Activated naive CD4-positive, alpha-beta T cell treated with anti-CD3 and anti-CD28 coated beads for 36 hours (primary cell): ENCODE measurements at regions of chr2 and their contacts with region 1.

Region 1: DNA sequence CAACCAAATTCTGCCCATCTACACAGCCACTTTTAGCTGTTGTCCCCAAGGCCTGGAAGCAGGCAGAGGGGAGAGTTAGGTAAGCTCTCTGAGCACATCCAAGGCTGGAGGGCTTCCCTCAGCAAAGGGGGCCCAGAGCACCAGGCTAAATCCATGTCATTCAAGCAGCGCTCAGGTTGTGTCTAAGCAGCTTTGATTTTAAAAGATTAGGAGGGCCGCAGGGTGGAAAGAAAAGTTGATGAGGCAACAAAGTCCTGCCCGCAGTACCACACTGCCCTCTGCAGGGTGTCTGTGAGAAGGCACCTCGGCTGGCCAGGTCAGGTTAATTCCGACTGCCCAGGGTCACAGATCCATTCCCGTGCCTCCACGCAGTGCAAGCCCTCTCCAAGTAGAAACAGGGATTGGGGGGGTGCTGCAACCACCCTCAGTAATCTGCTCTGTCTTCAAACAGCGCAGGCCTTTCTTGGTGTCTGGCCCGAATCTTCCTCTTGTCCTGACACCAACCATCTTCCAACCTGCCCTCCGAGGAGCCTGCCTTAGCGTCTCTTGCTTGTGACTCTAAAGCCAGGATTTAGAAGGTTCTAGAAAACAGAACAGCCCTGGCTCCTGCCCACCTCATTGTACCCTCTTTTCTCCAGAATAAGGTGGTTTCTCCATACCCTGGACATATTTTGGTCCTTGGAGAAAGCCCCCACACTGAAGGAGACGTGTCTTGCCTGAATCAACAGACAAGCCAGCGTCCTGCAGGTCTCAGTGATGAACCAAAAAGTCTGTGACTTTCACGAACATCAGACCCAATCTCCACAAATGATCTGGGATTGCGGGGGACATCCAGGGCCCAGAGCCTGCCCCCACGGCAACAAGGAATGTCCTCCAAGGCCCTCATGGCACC is 289.2 kb downstream of the TNS1 start:
- DNase-seq: peak; percentile 85
- H3K4me3 Mint-ChIP-seq: no peak overlapping the region
- H3K27ac Mint-ChIP-seq: no peak overlapping the region
- H3K4me1 Mint-ChIP-seq: peaks cover 3% of the 10 kb centered on the region
- H3K27me3 Mint-ChIP-seq: no peaks in the 10 kb centered on the region

Region 2: GRCh38 chr2:216683846-216684507 is 1029.7 kb before region 1 on chr2:
- CTCF ChIA-PET with region 1: interaction called, 7 read pairs
- intact Hi-C with region 1: loop called (anchors 1 kb)
- DNase-seq: no peak
- H3K4me3 Mint-ChIP-seq: no peak overlapping the region
- H3K27ac Mint-ChIP-seq: no peak overlapping the region
- H3K4me1 Mint-ChIP-seq: peaks cover 2% of the 10 kb centered on the region
- H3K27me3 Mint-ChIP-seq: peaks cover 27% of the 10 kb centered on the region

Region 3: DNA sequence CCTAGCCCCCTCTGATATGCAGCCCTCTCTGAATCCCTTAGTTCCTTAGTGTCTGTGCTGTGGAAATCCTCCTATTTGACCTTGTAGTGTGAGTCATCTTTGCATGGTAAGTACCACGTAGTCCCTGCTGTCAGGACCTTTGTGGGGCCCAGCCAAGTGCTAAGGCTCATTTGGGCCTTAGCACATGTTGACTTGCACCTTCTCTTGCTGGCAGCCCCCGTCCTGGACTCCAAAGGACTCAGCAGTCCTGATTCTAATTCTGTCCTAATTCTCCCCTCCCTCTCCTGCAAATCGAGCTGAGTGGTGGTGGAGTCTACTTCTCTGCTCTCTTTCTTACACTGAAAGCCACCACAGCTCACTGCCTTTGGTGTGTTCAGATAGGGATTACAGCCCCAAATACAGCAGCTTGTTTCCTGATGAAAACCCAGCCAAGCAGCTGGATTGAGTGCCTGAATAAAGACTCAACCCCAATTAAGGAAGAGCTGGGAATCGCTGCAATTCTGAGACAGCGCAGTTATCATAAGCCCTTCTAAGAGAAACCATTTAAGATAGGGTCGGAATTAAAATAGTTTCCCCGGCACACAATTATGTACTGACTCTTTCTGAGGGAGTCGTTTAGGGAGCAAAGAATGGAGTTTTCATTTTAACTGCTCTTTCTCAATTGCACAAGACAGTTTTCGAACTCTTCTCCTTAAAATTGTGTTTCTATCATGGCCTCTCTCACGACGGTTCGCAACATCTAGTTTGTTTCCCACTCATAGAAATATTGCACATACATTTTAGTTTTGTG is 638.2 kb before region 1 on chr2:
- CTCF ChIA-PET with region 1: interaction called, 3 read pairs
- intact Hi-C with region 1: loop called (anchors 10 kb)
- DNase-seq: no peak
- H3K4me3 Mint-ChIP-seq: no peak overlapping the region
- H3K27ac Mint-ChIP-seq: no peak overlapping the region
- H3K4me1 Mint-ChIP-seq: peaks cover 4% of the 10 kb centered on the region
- H3K27me3 Mint-ChIP-seq: no peaks in the 10 kb centered on the region

Region 4: DNA sequence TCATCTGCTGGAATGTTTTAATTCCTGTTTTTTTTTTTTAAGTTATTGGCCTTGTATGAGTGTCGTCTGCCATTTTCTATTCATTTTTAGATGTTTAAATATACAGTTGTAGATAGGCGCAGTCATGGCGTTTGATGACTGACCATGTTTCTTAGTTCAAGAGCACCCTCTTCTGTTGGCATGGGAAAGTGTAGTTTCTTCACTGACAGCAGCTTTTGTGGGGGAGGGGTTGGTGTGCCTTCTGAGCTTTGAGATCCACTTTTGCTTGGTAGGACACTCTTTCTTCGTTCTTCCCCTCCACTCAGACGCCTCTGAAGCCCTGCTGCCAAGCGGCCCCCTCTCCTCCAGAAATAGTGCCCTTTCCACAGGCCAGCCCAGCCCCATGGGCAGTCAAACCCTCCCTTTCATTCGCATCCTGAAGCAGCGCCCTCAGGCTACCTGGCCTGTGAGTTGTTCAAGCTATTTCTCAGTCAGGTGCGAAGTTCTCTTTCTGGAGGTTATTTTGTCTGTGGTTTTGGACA is 202.8 kb before region 1 on chr2:
- CTCF ChIA-PET with region 1: interaction called, 6 read pairs
- intact Hi-C with region 1: loop called (anchors 1 kb)
- DNase-seq: peak; percentile 70
- H3K4me3 Mint-ChIP-seq: no peak overlapping the region
- H3K27ac Mint-ChIP-seq: no peak overlapping the region
- H3K4me1 Mint-ChIP-seq: peaks cover 2% of the 10 kb centered on the region
- H3K27me3 Mint-ChIP-seq: no peaks in the 10 kb centered on the region

Region 5: DNA sequence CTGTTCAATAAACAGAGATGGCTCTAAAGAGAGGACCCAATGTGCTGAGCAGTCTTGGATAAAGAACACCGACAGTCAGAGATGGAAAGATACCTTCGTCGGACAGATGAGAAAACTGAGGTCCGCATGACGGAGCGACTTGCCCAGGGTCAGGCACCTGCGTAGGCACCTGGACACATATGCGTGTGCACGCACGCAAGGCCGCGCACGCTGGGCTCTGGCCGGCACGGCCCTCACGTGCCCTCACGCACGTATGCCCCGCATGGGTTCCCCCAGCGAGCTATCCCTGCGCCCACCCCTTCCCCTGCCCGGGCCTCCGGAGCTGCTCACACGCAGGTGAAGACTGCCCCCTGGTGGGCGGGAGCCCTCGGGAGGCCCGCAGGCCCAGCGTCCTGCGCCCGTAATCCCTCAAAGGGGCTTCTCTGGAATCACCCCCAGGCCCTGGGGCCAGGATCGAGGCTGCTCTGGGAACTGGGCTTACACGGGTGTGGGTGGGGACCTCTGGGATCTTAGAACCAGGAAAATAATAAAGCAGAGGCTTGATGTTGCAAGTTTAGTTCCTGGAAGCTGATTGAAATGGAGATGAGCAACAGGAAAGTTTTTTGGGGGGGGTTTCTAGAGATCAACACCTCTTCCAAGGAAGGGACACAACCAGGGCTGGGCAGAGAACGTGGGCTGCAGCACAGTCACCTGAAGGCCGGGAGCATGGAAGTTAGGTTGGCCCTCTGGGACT is 42.9 kb after region 1 on chr2:
- CTCF ChIA-PET with region 1: interaction called, 3 read pairs
- intact Hi-C with region 1: loop called (anchors 1 kb)
- DNase-seq: peak; percentile 79
- H3K4me3 Mint-ChIP-seq: peak overlapping the region; percentile 54
- H3K27ac Mint-ChIP-seq: peak overlapping the region; percentile 19
- H3K4me1 Mint-ChIP-seq: peaks cover 23% of the 10 kb centered on the region
- H3K27me3 Mint-ChIP-seq: peaks cover 2% of the 10 kb centered on the region